PC-9 (cell line): ENCODE measurements at regions of chr3 and their contacts with region 1.

Region 1: GRCh38 chr3:102078854-102079253 is 229.5 kb downstream of the NFKBIZ start:
- DNase-seq: peak in 1 of 2 experiments; percentile 27
- H3K4me3 ChIP-seq: 0 out of 2 replicates have a peak overlapping the region, but pooled peaks have one; percentile 3
- H3K27ac ChIP-seq: peak overlapping the region; percentile 39
- H3K4me1 ChIP-seq: peaks cover 20% of the 10 kb centered on the region
- H3K27me3 ChIP-seq: no peaks in the 10 kb centered on the region
- CTCF ChIP-seq: no peak

Region 2: GRCh38 chr3:101685870-101686412 is 392.9 kb before region 1 on chr3:
- CTCF ChIA-PET with region 1: no interaction called
- POLR2A ChIA-PET with region 1: no interaction called
- intact Hi-C with region 1: no loop called
- DNase-seq: no peak
- H3K4me3 ChIP-seq: peak overlapping the region; percentile 78
- H3K27ac ChIP-seq: peak overlapping the region; percentile 89
- H3K4me1 ChIP-seq: peaks cover 42% of the 10 kb centered on the region
- H3K27me3 ChIP-seq: no peaks in the 10 kb centered on the region
- CTCF ChIP-seq: no peak

Region 3: DNA sequence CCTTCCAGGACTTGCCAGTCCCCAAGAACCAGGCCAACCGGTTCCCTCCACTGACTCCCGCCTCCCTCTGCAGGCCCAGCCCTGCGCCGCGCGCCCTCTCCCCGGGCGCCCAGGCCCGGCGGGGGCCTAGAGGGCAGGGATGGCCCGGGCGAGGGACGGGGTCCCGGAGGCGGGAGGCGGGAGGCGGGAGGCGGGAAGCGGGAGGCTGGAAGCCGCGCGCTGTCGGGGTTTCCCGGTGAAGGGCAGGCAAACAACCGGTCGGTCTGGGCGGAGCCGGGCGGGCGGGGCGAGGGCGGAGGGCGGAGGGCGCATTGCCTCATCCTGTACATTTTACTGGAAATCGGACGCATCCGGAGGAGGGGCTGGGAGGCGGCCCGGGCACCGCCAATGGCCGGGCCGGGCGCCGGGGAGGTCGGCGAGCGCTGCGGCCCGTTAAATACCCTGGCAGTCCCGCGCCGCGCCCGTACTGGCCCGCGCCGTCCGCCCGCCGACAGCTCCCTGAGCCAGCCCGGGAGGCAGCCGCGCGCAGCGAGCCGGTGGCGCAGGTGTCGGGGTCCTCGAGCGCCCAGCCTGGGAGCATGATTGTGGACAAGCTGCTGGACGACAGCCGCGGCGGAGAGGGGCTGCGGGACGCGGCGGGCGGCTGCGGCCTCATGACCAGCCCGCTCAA is 229.7 kb before region 1 on chr3 and contains the start of gene NFKBIZ:
- CTCF ChIA-PET with region 1: no interaction called
- POLR2A ChIA-PET with region 1: no interaction called
- intact Hi-C with region 1: loop called (anchors 5 kb)
- DNase-seq: peak; percentile 91 to 99
- H3K4me3 ChIP-seq: peak within 1 kb of the TSS; percentile 88
- H3K27ac ChIP-seq: peak within 1 kb of the TSS; percentile 80
- H3K4me1 ChIP-seq: peaks cover 24% of the 10 kb centered on the region
- H3K27me3 ChIP-seq: no peaks in the 10 kb centered on the region
- CTCF ChIP-seq: no peak
- total RNA-seq, gene NFKBIZ: 44.9 and 57.7 TPM in 2 replicates

Region 4: GRCh38 chr3:102156426-102156825 is 77.6 kb after region 1 on chr3:
- CTCF ChIA-PET with region 1: no interaction called
- POLR2A ChIA-PET with region 1: interaction called, 12 read pairs
- intact Hi-C with region 1: no loop called
- DNase-seq: peak; percentile 60 to 85
- H3K4me3 ChIP-seq: no peak overlapping the region
- H3K27ac ChIP-seq: 0 out of 2 replicates have a peak overlapping the region, but pooled peaks have one; percentile 13
- H3K4me1 ChIP-seq: peaks cover 25% of the 10 kb centered on the region
- H3K27me3 ChIP-seq: no peaks in the 10 kb centered on the region
- CTCF ChIP-seq: no peak

Region 5: DNA sequence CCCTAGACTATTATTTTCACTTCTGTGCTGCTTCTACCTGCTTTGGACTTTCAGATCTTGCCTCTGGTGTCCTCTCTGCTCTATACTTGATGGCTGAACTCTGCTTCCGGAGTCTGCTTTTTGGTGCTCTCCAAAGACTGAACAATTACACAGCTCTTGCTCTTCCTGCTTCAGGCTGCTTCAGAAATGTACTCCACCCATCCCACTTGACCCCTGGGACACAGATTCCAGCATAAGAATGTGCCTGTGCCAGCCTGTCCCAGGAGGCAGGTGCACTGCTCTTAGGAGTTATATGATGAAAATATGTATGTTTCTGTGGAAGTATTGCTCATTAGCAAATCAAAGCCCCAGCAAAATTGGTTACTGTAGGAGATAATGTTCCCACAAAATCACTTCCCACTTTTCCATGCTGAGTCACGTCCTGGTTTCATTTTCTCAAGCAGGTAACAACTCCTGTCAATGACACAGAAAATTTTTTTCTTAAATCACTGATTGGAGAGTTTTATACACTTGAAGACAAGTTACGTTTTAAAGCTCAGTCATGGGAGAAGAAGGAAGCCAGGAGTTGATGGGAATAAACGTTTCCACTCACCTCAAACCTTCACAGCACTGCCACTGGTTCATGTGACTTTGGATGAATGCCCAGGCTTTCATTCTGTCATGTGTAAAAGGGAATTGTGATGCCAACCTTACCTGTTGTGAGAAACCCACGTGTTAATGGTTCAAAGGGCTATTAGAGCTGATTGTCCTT is 116.5 kb after region 1 on chr3:
- CTCF ChIA-PET with region 1: no interaction called
- POLR2A ChIA-PET with region 1: no interaction called
- intact Hi-C with region 1: loop called (anchors 1 kb)
- DNase-seq: peak; percentile 78 to 79
- H3K4me3 ChIP-seq: peak overlapping the region; percentile 0; the same call in 1 of the 2 replicates
- H3K27ac ChIP-seq: peak overlapping the region; percentile 75
- H3K4me1 ChIP-seq: peaks cover 28% of the 10 kb centered on the region
- H3K27me3 ChIP-seq: no peaks in the 10 kb centered on the region
- CTCF ChIP-seq: no peak